T-cell (primary cell): ENCODE measurements at regions of chrX and their contacts with region 1.

Region 1: GRCh38 chrX:53642337-53642736 is 44.2 kb downstream of the HUWE1 start:
- DNase-seq: no peak
- ATAC-seq: no peak
- H3K4me3 ChIP-seq: no peak overlapping the region
- H3K4me3 Mint-ChIP-seq: no peak overlapping the region
- H3K27ac ChIP-seq: no peak overlapping the region
- H3K27ac Mint-ChIP-seq: no peak overlapping the region
- H3K4me1 ChIP-seq: no peaks in the 10 kb centered on the region
- H3K4me1 Mint-ChIP-seq: peaks cover 0 to 4% (median 0%) of the 10 kb centered on the region in 3 donors
- H3K27me3 ChIP-seq: no peaks in the 10 kb centered on the region
- H3K27me3 Mint-ChIP-seq: peaks cover 0 to 7% of the 10 kb centered on the region in 2 donors

Region 2: DNA sequence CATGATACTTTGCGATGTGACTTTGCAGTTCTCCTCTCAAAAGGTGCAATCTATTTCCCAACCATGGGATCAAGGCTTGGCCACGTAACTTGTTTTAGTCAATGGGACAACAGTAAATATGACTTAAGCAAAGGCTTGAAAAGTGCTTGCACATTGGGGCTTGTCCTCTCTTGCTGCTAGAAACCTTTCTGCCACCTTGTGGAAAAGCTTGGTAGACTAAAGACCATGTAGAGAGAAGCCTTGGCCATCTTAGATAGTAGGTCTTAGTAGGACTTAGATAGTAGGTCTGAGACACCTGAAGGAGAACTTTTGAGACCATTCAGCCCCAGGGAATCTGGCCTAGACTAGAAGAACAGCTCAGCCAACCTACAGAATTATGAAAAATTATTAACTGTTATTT is 319.5 kb after region 1 on chrX:
- CTCF ChIA-PET with region 1: interaction called in 1 of 2 experiments, 17 read pairs
- POLR2A ChIA-PET with region 1: no interaction called
- DNase-seq: no peak
- ATAC-seq: no peak
- H3K4me3 ChIP-seq: no peak overlapping the region
- H3K4me3 Mint-ChIP-seq: no peak overlapping the region
- H3K27ac ChIP-seq: no peak overlapping the region
- H3K27ac Mint-ChIP-seq: no peak overlapping the region
- H3K4me1 ChIP-seq: no peaks in the 10 kb centered on the region
- H3K4me1 Mint-ChIP-seq: no peaks in the 10 kb centered on the region
- H3K27me3 ChIP-seq: no peaks in the 10 kb centered on the region
- H3K27me3 Mint-ChIP-seq: peaks cover 0 to 4% of the 10 kb centered on the region in 2 donors